GM12878 (cell line): ENCODE measurements at regions of chr20 and their contacts with region 1.

Region 1: DNA sequence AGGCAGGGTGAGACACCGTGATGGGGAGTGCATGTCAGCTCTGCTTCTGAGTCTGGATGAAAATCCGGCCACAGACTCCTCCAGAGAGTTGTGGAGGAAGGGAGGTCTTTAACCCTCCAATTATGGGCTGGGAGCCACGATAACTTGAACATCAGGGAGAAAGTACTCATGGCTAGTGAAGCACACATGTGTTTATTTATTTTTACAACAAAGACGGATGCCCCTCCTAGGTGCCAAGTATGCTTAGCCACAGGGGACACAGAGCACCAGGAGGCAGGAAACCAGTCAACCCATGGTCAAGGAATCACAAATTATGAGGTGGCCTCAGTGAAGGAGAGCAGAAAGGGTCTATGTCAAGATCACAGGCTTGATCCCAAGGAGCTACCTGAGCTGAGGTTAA is 54.1 kb downstream of the ZNF217 start:
- DNase-seq: no peak
- ATAC-seq: no peak
- H3K4me3 ChIP-seq: no peak overlapping the region
- H3K27ac ChIP-seq: no peak overlapping the region
- H3K4me1 ChIP-seq: no peaks in the 10 kb centered on the region
- H3K27me3 ChIP-seq: no peaks in the 10 kb centered on the region
- CTCF ChIP-seq: no peak
- EP300 ChIP-seq: no peak
- POLR2A ChIP-seq: no peak
- RAD21 ChIP-seq: no peak

Region 2: GRCh38 chr20:53258787-53259186 is 280.7 kb before region 1 on chr20:
- CTCF ChIA-PET with region 1: no interaction called
- POLR2A ChIA-PET with region 1: no interaction called
- RAD21 ChIA-PET with region 1: no interaction called
- SMC1A ChIA-PET with region 1: no interaction called
- in situ Hi-C with region 1: no loop called
- intact Hi-C with region 1: loop called (anchors 10 kb)
- DNase-seq: no peak
- ATAC-seq: no peak
- H3K4me3 ChIP-seq: no peak overlapping the region
- H3K27ac ChIP-seq: no peak overlapping the region
- H3K4me1 ChIP-seq: no peaks in the 10 kb centered on the region
- H3K27me3 ChIP-seq: no peaks in the 10 kb centered on the region
- CTCF ChIP-seq: no peak
- EP300 ChIP-seq: no peak
- POLR2A ChIP-seq: no peak
- RAD21 ChIP-seq: no peak